Ascending aorta (tissue), 2 donors: ENCODE measurements at regions of chr4 and their contacts with region 1.

Region 1: GRCh38 chr4:52038103-52038912 is at the start of gene SGCB:
- DNase-seq: peak in 1 of 2 donors; percentile 78
- H3K4me3 ChIP-seq: peak within 1 kb of the TSS; percentile 91 to 93
- H3K27ac ChIP-seq: peak within 1 kb of the TSS; percentile 73 to 79
- H3K4me1 ChIP-seq: peaks cover 0 to 16% of the 10 kb centered on the region in 2 donors
- H3K27me3 ChIP-seq: no peaks in the 10 kb centered on the region
- CTCF ChIP-seq: peak in 1 of 3 experiments; percentile 13
- total RNA-seq, gene SGCB: 14.9 TPM

Region 2: DNA sequence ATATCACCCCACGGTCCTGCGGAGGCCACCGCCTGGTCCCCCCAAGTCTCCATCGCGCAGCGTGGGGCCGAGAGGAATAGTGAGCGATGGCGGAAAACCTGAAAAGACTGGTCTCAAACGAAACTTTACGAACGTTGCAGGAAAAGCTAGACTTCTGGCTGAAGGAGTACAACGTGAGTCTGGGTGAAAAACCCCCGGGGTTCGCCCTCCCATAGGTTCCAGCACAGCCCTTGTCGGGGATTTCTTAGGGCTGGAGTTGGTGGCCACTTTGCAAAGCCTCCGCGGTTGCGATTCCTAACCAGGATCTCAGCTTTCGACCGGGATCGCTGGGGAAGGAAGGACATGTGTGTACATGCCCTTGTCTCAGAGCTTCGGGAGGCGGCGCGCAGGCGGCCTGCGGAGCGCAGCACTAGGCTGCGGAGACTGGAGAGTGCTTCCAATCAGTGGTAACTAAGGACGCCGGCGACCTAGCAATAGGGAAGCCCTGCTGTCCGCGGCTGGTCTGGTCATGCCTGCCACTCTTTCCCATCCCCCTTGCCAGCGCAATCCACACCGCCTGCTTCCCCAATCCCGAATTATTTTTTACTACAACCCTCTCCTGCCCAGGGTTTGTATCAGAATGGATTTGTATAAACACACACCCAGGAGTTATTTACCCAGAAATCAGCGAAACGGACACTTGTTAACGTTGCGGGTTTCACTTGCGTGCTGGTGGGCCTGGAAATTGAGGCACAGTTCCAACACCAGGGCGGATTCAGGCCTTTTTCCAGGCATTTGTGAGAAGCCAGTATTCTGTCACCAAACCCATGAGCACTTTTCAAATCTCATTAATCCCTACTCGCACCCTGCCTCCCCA is 13.5 kb after region 1 on chr4:
- intact Hi-C with region 1: loop called (anchors 1 kb)
- DNase-seq: peak in 1 of 2 donors; percentile 81
- H3K4me3 ChIP-seq: peak overlapping the region; percentile 65 to 82
- H3K27ac ChIP-seq: peak overlapping the region; percentile 73 to 77
- H3K4me1 ChIP-seq: no peaks in the 10 kb centered on the region
- H3K27me3 ChIP-seq: no peaks in the 10 kb centered on the region
- CTCF ChIP-seq: no peak

Region 3: DNA sequence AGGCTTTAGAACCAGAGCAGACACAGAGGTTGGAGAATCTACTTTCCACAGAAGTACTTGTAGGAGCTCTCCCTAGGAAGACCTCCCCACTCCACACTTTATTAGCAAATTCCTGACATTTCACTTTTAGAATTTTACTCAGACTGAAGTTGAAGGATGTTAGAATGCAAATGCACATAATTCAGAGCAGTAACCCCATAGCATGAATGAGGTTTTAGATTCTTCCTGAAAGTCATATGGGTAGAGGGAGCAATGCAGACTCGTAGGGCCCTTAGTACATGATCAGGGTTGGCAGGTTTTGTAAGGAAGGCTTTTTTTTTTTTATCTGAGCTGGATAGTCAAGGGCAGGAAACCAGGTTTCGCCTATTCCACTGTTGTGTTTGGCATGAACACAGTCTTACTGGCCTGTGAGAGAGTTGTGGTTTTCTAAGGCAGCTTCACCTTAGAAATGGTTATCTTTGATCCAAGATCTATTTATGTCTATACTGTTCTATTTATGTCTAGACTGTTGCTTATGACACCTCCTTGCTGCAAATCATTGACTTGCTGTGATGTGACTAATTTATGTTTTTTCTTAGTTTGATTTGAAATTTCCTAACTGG is 61.7 kb after region 1 on chr4:
- intact Hi-C with region 1: no loop called
- DNase-seq: no peak
- H3K4me3 ChIP-seq: no peak overlapping the region
- H3K27ac ChIP-seq: peak overlapping the region in 1 of 2 donors; percentile 48
- H3K4me1 ChIP-seq: peaks cover 0 to 7% of the 10 kb centered on the region in 2 donors
- H3K27me3 ChIP-seq: no peaks in the 10 kb centered on the region
- CTCF ChIP-seq: no peak

Region 4: DNA sequence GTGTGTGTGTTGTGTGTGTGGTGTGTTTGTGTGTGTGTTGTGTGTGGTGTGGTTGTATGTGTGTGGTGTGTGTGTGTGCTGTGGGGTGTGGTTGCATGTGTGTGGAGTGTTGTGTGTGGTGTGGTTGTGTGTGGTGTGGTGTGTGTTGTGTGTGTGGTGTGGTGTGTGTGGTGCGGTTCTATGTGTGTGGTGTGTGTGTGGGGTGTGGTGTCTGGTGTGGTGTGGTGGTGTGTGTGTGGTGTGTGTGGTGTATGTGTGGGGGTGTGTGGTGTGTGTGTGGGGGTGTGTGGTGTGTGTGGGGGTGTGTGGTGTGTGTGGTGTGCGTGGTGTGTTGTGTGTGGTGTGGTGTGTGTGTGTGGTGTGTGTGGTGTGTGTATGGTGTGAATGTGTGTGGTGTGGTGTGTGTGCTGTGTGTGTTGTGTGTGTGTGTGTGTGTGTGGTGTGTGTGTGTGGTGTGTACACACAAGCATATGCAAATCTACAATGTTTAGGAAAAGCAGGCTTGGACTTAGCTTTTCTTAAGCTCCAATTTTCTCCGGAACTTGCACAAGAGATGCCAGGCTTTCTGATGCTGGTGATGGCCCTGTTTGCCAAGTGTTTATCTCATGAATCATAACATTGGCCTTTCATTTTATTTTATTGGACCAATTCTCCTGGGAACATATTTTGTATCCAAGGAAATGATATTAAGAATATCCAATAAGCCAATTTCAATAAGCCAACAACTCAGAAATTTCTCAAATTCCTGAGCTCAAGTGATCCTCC is 161.4 kb after region 1 on chr4:
- intact Hi-C with region 1: loop called (anchors 5 kb)
- DNase-seq: peak in 1 of 2 donors; percentile 73
- H3K4me3 ChIP-seq: no peak overlapping the region
- H3K27ac ChIP-seq: peak overlapping the region in 1 of 2 donors; percentile 18
- H3K4me1 ChIP-seq: peaks cover 0 to 2% of the 10 kb centered on the region in 2 donors
- H3K27me3 ChIP-seq: no peaks in the 10 kb centered on the region
- CTCF ChIP-seq: no peak

Region 5: GRCh38 chr4:52861879-52862616 is 823.7 kb after region 1 on chr4 and contains the start of gene RASL11B:
- intact Hi-C with region 1: loop called (anchors 10 kb)
- DNase-seq: peak; percentile 20 to 90
- H3K4me3 ChIP-seq: peak within 1 kb of the TSS; percentile 72 to 80
- H3K27ac ChIP-seq: peak within 1 kb of the TSS; percentile 68 to 79
- H3K4me1 ChIP-seq: peaks cover 0 to 17% of the 10 kb centered on the region in 2 donors
- H3K27me3 ChIP-seq: no peaks in the 10 kb centered on the region
- CTCF ChIP-seq: peak in 2 of 3 experiments; percentile 24 to 43
- total RNA-seq, gene RASL11B: not detected